ENCODE measurements at regions of chr22 and their contacts with region 1.

Region 1: GRCh38 chr22:48156603-48157355 is 1394.3 kb downstream of the TBC1D22A start:
- DNase-seq: no peak
- ATAC-seq: no peak
- H3K4me3 ChIP-seq: no peak overlapping the region
- H3K27ac ChIP-seq: no peak overlapping the region
- H3K4me1 ChIP-seq: no peaks in the 10 kb centered on the region
- H3K27me3 ChIP-seq: no peaks in the 10 kb centered on the region
- CTCF ChIP-seq: no peak
- EP300 ChIP-seq: no peak
- POLR2A ChIP-seq: no peak
- RAD21 ChIP-seq: no peak

Region 2: DNA sequence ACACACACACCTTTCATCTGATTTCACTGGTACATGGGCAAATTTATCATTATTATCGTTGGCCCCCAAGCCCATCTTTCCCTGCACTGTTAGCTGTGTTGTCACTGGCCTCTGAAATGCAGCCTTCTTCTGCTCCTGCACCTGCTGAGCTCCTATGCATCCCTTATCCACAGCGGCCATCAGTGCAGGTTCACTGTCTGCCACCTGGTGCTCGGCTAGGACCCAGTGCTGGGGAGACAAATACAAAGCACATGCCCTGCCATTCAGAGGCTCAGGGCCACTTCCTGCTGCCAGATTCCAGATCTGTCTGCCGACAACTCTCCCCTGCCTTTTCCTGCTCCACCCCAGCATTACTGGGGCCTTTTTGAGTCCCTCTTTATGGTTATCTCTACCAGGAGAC is 188.9 kb before region 1 on chr22:
- CTCF ChIA-PET with region 1: no interaction called
- POLR2A ChIA-PET with region 1: no interaction called
- RAD21 ChIA-PET with region 1: no interaction called
- SMC1A ChIA-PET with region 1: no interaction called
- in situ Hi-C with region 1: no loop called
- intact Hi-C with region 1: no loop called
- DNase-seq: no peak
- ATAC-seq: no peak
- H3K4me3 ChIP-seq: no peak overlapping the region
- H3K27ac ChIP-seq: no peak overlapping the region
- H3K4me1 ChIP-seq: no peaks in the 10 kb centered on the region
- H3K27me3 ChIP-seq: no peaks in the 10 kb centered on the region
- CTCF ChIP-seq: no peak
- EP300 ChIP-seq: no peak
- POLR2A ChIP-seq: no peak
- RAD21 ChIP-seq: no peak

Region 3: DNA sequence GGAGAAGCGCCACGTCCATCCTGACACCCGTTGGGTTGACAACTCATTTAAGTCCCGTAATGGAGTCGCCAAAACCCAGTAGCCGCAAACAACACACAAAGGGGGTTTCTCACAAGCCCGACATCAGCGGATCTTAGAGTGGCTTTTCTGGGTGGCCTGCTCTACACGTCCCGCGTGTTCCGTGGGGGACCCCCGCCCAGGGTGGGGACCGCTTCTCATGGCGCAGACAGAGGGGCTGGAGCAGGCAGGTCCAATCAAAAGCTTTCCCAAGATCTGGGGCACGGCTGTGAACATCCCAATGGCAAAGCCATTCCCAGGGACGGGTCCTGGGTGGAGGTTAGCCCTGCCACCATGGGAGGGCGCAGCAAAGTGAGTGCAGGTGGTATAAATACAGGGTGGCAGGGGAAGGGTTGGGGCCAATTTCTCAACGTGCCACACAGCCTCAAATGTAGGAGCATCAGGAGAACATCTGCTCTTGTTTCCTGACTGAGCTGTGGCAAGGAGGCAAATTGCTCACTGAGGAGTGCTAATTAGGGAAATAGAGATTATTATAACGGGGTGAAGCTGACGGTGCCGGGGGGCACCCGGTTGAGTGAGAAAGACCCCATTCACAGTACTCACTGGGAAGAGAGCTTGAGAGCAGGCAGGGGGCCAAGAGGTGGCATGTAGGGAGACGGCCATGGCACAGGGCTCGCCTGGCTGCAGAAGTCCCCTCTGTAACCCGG is 52.9 kb after region 1 on chr22:
- CTCF ChIA-PET with region 1: no interaction called
- POLR2A ChIA-PET with region 1: no interaction called
- RAD21 ChIA-PET with region 1: no interaction called
- SMC1A ChIA-PET with region 1: no interaction called
- in situ Hi-C with region 1: loop called (anchors 5 kb)
- intact Hi-C with region 1: no loop called
- DNase-seq: no peak
- ATAC-seq: no peak
- H3K4me3 ChIP-seq: no peak overlapping the region
- H3K27ac ChIP-seq: no peak overlapping the region
- H3K4me1 ChIP-seq: no peaks in the 10 kb centered on the region
- H3K27me3 ChIP-seq: no peaks in the 10 kb centered on the region
- CTCF ChIP-seq: no peak
- EP300 ChIP-seq: no peak
- POLR2A ChIP-seq: no peak
- RAD21 ChIP-seq: no peak

Region 4: GRCh38 chr22:48287027-48287426 is 130.2 kb after region 1 on chr22:
- CTCF ChIA-PET with region 1: no interaction called
- POLR2A ChIA-PET with region 1: no interaction called
- RAD21 ChIA-PET with region 1: no interaction called
- SMC1A ChIA-PET with region 1: no interaction called
- in situ Hi-C with region 1: no loop called
- intact Hi-C with region 1: no loop called
- DNase-seq: no peak
- ATAC-seq: no peak
- H3K4me3 ChIP-seq: no peak overlapping the region
- H3K27ac ChIP-seq: no peak overlapping the region
- H3K4me1 ChIP-seq: no peaks in the 10 kb centered on the region
- H3K27me3 ChIP-seq: no peaks in the 10 kb centered on the region
- CTCF ChIP-seq: no peak
- EP300 ChIP-seq: no peak
- POLR2A ChIP-seq: no peak
- RAD21 ChIP-seq: no peak